Activated T-helper 1 cell treated with anti-CD3 and anti-CD28 coated beads, Interleukin-12 subunit alpha, Interleukin-12 subunit beta, Interleukin-2, Interleukin-4 antibody, amounts not matched to agents 30 ng/mL and 10 ng/mL and 1 ng/mL, durations not matched to agents 14 hours and 24 hours and 36 hours (primary cell): ENCODE measurements at regions of chr19 and their contacts with region 1.

Region 1: DNA sequence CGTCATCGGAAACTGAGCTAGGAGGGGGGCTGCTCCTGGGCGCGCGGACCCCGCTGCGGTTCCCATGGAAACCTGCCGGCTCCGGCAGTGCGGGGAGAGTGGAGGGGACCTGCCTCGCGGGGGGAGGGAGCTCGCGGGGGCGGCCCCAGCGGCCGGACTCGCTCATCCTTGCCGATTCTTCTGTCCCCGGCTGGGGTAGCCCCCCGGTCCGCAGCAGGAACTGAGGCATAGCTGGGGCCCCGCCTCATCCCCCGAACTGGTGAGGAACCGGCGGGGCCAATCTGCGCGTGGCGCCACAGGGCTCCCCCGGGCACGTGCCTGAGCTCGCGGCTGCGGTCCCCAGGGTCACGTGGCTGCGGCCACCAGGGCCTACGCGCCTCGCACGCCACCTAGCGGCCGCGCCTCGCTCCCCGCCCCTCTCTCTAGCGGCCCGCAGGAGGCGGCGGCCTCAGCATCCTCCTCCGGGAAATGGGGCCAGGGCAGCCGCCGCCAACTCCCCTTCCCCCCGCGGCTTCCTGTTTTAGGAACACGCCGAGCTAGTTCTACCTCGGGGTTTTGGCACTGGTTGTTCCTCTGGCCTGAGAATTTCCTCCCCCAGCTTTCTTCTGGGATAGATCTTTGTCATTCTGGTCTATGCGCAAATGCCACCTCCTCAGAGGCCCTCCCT is 1.7 kb upstream of the ELAVL3 start:
- DNase-seq: peak; percentile 84
- H3K4me3 Mint-ChIP-seq: peak overlapping the region; percentile 82
- H3K27ac Mint-ChIP-seq: peak overlapping the region; percentile 88
- H3K4me1 Mint-ChIP-seq: peaks cover 16% of the 10 kb centered on the region
- H3K27me3 Mint-ChIP-seq: peaks cover 25% of the 10 kb centered on the region

Region 2: DNA sequence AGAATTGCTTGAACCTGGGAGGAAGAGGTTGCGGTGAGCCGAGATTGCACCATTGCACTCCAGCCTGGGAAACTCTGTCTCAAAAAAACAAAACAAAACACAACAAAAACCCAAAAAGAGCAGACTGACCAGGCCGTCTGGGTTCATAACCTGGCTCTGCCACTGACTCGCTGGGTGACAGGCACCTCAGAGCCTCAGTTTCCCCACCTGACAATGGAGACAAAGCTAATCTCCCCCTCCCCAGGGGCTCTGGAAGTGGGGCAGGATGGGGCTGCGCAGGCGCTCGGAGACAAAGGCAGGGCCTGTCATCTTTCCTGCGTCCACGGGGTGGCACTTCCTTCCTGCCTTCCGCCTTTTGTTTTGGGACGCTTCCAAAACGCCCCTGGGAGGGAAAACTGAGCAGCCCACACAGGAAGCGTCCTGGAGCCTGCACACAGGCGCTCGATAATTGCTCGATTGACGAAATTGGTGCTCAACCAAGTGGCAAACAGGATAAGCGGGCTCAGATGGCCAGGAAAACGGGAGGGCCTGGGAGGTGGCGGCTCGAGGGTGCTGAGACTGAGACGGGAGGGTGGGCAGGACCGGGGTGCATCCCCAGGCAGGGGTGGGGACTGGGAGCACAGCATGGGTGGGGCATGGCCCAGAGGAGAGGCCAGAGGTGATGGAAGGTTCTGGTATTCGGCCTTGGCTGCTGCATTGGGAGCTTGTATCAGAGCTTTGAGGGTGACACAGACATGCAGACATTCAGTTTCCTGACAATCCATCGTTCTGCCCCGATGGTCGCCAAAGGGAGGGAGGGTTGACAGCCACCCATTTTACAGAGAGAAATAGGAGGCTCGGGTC is 344.8 kb before region 1 on chr19:
- intact Hi-C with region 1: loop called (anchors 5 kb)
- DNase-seq: peak; percentile 21
- H3K4me3 Mint-ChIP-seq: peak overlapping the region; percentile 82
- H3K27ac Mint-ChIP-seq: no peak overlapping the region
- H3K4me1 Mint-ChIP-seq: peaks cover 8% of the 10 kb centered on the region
- H3K27me3 Mint-ChIP-seq: no peaks in the 10 kb centered on the region

Region 3: GRCh38 chr19:11346092-11346940 is 136.2 kb before region 1 on chr19 and contains the starts of genes CCDC159 and TMEM205:
- intact Hi-C with region 1: loop called (anchors 2 kb)
- DNase-seq: peak; percentile 98
- H3K4me3 Mint-ChIP-seq: peak within 1 kb of the TSS; percentile 89
- H3K27ac Mint-ChIP-seq: peak within 1 kb of the TSS; percentile 93
- H3K4me1 Mint-ChIP-seq: peaks cover 28% of the 10 kb centered on the region
- H3K27me3 Mint-ChIP-seq: no peaks in the 10 kb centered on the region
- total RNA-seq, gene CCDC159: 10.7 and 14.4 TPM in 2 replicates
- total RNA-seq, gene TMEM205: 26.6 and 31.2 TPM in 2 replicates

Region 4: GRCh38 chr19:11422163-11423021 is 60.1 kb before region 1 on chr19:
- intact Hi-C with region 1: loop called (anchors 5 kb)
- DNase-seq: peak; percentile 67
- H3K4me3 Mint-ChIP-seq: peak overlapping the region; percentile 72
- H3K27ac Mint-ChIP-seq: no peak overlapping the region
- H3K4me1 Mint-ChIP-seq: peaks cover 31% of the 10 kb centered on the region
- H3K27me3 Mint-ChIP-seq: peaks cover 64% of the 10 kb centered on the region

Region 5: DNA sequence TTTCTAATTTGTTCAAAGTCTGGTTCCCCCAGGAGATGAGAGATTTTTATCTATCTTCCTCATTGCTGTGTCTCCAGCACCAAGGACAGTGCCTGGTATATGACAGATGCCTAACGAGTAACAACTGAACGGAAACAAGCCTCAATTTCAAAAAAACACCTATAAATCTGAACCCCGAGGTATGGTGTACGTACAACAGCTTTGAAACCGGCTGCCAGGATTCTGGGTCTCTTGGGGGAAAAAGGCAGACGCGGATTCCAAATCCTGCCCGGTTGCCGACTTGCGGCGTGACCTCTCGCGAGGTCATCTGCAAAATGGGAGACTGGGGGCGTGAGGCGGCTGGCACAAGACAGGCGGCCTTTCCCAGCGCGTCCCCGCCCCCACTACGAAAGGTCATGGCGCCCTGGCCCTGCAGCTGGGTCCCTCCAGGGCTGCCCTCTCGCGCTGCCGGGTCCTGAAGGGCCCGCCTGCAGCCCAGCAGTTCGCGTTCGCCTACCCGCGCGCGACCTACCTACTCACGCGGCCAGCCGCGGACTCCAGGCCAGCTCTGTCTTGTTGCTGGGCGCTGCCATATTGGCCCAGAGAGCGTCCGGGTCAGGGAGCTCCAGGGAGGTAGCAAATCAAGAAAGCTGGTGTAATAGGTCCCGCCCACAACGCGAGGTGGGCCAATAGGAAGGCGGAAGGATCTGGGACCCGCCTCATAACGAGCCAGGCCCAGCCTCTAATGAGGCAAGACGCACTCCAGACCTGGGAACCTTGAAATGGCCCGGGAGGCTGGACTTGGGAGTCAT is 46.2 kb after region 1 on chr19 and contains the start of gene ECSIT:
- intact Hi-C with region 1: loop called (anchors 1 kb)
- DNase-seq: peak; percentile 89
- H3K4me3 Mint-ChIP-seq: peak within 1 kb of the TSS; percentile 95
- H3K27ac Mint-ChIP-seq: peak within 1 kb of the TSS; percentile 92
- H3K4me1 Mint-ChIP-seq: peaks cover 28% of the 10 kb centered on the region
- H3K27me3 Mint-ChIP-seq: no peaks in the 10 kb centered on the region
- total RNA-seq, gene ECSIT: 37.3 and 38.8 TPM in 2 replicates

Region 6: DNA sequence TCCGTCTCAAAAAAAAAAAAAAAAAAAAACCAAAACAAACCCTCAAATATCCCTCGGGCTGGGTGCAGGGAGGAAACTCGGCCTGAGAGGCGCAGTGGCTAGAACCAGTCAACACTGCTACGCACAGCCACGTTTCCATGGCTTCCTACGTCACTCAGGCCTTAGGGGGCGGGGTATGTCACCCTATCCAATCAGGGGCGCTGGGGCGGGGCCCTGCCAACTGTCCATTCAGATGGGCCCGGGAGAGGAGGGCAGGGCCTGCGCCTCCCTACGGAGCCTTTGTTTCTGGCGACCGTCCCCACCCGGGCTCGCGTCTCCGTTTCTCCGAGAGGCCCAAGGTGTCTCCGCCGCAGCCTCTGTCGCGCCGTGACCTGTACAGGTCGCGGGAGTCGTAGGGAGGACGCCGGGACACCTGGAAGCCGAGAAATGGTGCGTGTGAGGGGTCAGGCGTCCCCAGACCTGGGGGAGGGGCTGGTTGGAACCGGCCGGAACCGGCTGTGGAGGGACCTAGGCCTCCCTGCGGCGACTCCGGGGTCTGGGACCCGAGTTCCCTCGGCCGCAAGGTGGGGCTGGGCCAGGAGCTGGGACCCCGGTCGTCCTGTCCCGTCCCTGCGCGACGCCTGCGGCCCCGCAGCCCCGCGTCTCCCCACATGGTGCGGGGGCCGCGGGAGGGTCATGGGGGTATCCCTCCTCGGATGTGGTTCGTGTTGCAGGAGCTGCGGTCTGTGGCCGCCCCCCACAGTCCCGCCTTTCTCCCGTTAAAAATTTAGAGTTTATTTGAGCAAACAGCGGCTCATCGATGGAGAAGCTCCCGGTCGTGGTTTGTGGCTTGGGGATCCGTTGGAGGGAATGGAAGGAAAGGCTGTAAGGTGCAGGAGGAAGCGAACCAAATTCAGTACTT is 114.9 kb after region 1 on chr19 and contains the start of gene ZNF627:
- intact Hi-C with region 1: loop called (anchors 1 kb)
- DNase-seq: peak; percentile 96
- H3K4me3 Mint-ChIP-seq: peak within 1 kb of the TSS; percentile 93
- H3K27ac Mint-ChIP-seq: peak within 1 kb of the TSS; percentile 89
- H3K4me1 Mint-ChIP-seq: peaks cover 10% of the 10 kb centered on the region
- H3K27me3 Mint-ChIP-seq: no peaks in the 10 kb centered on the region
- total RNA-seq, gene ZNF627: 4.3 and 5.2 TPM in 2 replicates